ENCODE measurements at regions of chr15 and their contacts with region 1.

Region 1: DNA sequence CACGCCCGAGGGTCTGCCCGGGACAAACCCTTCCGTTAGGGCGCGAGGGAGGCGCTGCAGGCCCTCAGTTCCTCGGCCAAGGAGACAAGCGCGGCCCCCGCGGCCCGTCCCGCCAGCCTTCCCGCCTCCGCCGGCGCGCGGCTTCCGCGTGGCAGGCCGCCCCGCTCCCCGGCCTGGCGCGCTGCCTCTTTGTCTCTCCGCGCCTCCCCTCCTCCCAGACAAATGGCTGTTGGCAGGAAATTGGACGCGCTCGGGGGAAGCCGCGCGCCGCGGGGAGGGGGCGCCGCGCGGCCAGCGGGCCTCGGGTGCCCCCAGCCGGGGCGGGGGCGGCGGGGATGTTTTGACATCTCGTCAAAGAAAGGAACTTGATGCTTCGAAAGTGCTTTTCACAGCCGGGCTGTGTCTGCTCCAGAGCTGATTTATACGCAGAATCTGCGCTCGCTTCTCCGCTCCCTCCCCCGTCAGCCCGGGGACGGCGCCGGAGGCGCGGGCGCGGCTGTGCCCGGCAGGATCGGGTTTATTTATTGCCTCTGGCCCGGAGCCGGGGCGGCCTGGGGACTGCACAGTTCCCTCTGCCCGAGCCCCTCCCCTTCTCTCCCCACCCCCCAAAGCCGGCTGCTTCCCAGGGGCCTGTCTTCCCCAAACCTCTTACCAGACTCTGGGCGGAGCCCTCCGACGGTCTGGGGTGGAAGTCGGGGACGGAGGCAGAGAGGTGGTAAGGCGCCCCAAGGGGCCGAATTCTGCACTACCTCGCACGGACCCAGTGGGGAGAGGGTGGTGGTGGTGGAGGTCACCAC is 20.7 kb downstream of the SHF start:
- DNase-seq: peak; percentile 87 to 92 (median 88)
- ATAC-seq: peak; percentile 93
- H3K4me3 ChIP-seq: peak overlapping the region; percentile 69
- H3K27ac ChIP-seq: peak overlapping the region; percentile 86
- H3K4me1 ChIP-seq: peaks cover 31 to 49% of the 10 kb centered on the region in 2 experiments
- H3K27me3 ChIP-seq: no peaks in the 10 kb centered on the region
- CTCF ChIP-seq: peak; percentile 78 to 95 (median 86)
- EP300 ChIP-seq: no peak
- POLR2A ChIP-seq: peak; percentile 71
- RAD21 ChIP-seq: peak; percentile 25 to 36

Region 2: GRCh38 chr15:45179221-45179985 is 12.4 kb after region 1 on chr15:
- CTCF ChIA-PET with region 1: no interaction called
- POLR2A ChIA-PET with region 1: interaction called, 12 read pairs
- in situ Hi-C with region 1: no loop called
- intact Hi-C with region 1: no loop called
- DNase-seq: peak; percentile 47 to 60 (median 56)
- ATAC-seq: peak; percentile 74
- H3K4me3 ChIP-seq: no peak overlapping the region
- H3K27ac ChIP-seq: no peak overlapping the region
- H3K4me1 ChIP-seq: peaks cover 9 to 14% of the 10 kb centered on the region in 2 experiments; a peak in 3 of 5 replicates
- H3K27me3 ChIP-seq: no peaks in the 10 kb centered on the region
- CTCF ChIP-seq: peak; percentile 63 to 71 (median 63)
- EP300 ChIP-seq: no peak
- POLR2A ChIP-seq: no peak
- RAD21 ChIP-seq: peak in 1 of 2 experiments; percentile 49; a peak in 2 of 4 replicates

Region 3: GRCh38 chr15:45205192-45205591 is 38.2 kb after region 1 on chr15:
- CTCF ChIA-PET with region 1: no interaction called
- POLR2A ChIA-PET with region 1: interaction called, 5 read pairs
- in situ Hi-C with region 1: no loop called
- intact Hi-C with region 1: loop called (anchors 1 kb)
- DNase-seq: peak; percentile 45 to 79 (median 62)
- ATAC-seq: peak; percentile 68
- H3K4me3 ChIP-seq: no peak overlapping the region
- H3K27ac ChIP-seq: no peak overlapping the region
- H3K4me1 ChIP-seq: peaks cover 0 to 2% of the 10 kb centered on the region in 2 experiments; a peak in 2 of 5 replicates
- H3K27me3 ChIP-seq: peaks cover 2 to 4% of the 10 kb centered on the region in 2 experiments; a peak in 1 of 5 replicates
- CTCF ChIP-seq: peak; percentile 89 to 97 (median 95)
- EP300 ChIP-seq: no peak
- POLR2A ChIP-seq: no peak
- RAD21 ChIP-seq: peak; percentile 70 to 86

Region 4: DNA sequence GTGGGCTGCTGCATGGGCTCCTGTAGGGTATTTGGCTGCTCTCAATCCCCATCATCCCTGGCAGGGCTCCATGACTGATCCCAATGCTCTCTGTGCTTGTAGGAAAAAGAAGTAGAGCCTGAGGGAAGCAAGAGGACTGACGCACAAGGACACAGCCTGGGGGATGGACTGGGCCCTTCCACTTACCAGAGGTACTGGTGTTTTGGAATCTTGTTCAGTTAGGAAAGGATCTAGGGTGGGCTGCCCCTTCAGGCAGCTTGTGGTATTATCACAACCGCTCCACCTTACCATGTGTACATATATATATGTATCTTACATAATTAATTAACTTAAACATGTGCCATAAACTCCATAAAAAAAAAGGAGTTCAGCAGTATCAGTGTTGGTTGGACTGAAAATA is 86.3 kb after region 1 on chr15:
- CTCF ChIA-PET with region 1: no interaction called
- POLR2A ChIA-PET with region 1: no interaction called
- in situ Hi-C with region 1: no loop called
- intact Hi-C with region 1: no loop called
- DNase-seq: peak in 2 of 4 experiments; percentile 25 to 36
- ATAC-seq: peak; percentile 89
- H3K4me3 ChIP-seq: no peak overlapping the region
- H3K27ac ChIP-seq: no peak overlapping the region
- H3K4me1 ChIP-seq: no peaks in the 10 kb centered on the region
- H3K27me3 ChIP-seq: no peaks in the 10 kb centered on the region
- CTCF ChIP-seq: peak in 2 of 3 experiments; percentile 29 to 49; a peak in 3 of 6 replicates
- EP300 ChIP-seq: no peak
- POLR2A ChIP-seq: no peak
- RAD21 ChIP-seq: no peak

Region 5: GRCh38 chr15:45402162-45402954 is 235.3 kb after region 1 on chr15:
- CTCF ChIA-PET with region 1: no interaction called
- POLR2A ChIA-PET with region 1: no interaction called
- in situ Hi-C with region 1: no loop called
- intact Hi-C with region 1: loop called (anchors 5 kb)
- DNase-seq: peak; percentile 96 to 99 (median 98)
- ATAC-seq: peak; percentile 94
- H3K4me3 ChIP-seq: peak overlapping the region; percentile 94
- H3K27ac ChIP-seq: peak overlapping the region; percentile 88
- H3K4me1 ChIP-seq: peaks cover 11 to 12% of the 10 kb centered on the region in 2 experiments; a peak in 2 of 5 replicates
- H3K27me3 ChIP-seq: no peaks in the 10 kb centered on the region
- CTCF ChIP-seq: no peak
- EP300 ChIP-seq: 0 out of 2 replicates have a peak, but pooled peaks have one; percentile 14
- POLR2A ChIP-seq: peak; percentile 94
- RAD21 ChIP-seq: no peak

Region 6: DNA sequence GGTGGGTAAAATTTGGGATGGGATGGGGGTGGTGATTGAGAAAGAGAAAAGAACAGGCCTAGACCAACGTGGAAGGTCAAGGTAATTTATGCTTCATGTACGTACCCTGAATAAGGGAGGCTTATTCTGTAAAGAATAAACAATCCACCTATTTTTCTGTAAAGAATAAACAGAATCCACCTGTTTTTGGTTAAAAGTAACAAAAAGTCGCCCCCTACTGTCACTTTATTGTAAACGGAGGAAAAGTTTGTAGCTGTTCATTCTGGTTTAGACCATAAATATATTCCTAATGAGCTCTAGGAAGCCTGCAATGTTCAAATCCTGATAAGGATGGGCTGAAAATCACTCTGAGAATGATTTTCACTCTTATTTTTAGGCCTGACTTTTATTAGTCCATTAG is 444.3 kb after region 1 on chr15:
- CTCF ChIA-PET with region 1: no interaction called
- POLR2A ChIA-PET with region 1: no interaction called
- in situ Hi-C with region 1: no loop called
- intact Hi-C with region 1: loop called (anchors 10 kb)
- DNase-seq: peak in 2 of 4 experiments; percentile 24 to 46
- ATAC-seq: peak; percentile 64
- H3K4me3 ChIP-seq: no peak overlapping the region
- H3K27ac ChIP-seq: no peak overlapping the region
- H3K4me1 ChIP-seq: no peaks in the 10 kb centered on the region
- H3K27me3 ChIP-seq: no peaks in the 10 kb centered on the region
- CTCF ChIP-seq: peak; percentile 35 to 76 (median 50); a peak in 5 of 6 replicates
- EP300 ChIP-seq: no peak
- POLR2A ChIP-seq: no peak
- RAD21 ChIP-seq: peak; percentile 61 to 73

Measured in K562 (cell line).